ENCODE measurements at regions of chr15 and their contacts with region 1.

Region 1: GRCh38 chr15:56918046-56918938 is at the start of gene TCF12:
- DNase-seq: peak; percentile 95
- H3K4me3 ChIP-seq: peak within 1 kb of the TSS; percentile 90 to 98 (median 97)
- H3K27ac ChIP-seq: peak within 1 kb of the TSS; percentile 84
- H3K4me1 ChIP-seq: peaks cover 8% of the 10 kb centered on the region
- H3K27me3 ChIP-seq: no peaks in the 10 kb centered on the region
- CTCF ChIP-seq: peak in 1 of 2 donors; percentile 66
- total RNA-seq, gene TCF12: 91.7 to 110 TPM

Region 2: DNA sequence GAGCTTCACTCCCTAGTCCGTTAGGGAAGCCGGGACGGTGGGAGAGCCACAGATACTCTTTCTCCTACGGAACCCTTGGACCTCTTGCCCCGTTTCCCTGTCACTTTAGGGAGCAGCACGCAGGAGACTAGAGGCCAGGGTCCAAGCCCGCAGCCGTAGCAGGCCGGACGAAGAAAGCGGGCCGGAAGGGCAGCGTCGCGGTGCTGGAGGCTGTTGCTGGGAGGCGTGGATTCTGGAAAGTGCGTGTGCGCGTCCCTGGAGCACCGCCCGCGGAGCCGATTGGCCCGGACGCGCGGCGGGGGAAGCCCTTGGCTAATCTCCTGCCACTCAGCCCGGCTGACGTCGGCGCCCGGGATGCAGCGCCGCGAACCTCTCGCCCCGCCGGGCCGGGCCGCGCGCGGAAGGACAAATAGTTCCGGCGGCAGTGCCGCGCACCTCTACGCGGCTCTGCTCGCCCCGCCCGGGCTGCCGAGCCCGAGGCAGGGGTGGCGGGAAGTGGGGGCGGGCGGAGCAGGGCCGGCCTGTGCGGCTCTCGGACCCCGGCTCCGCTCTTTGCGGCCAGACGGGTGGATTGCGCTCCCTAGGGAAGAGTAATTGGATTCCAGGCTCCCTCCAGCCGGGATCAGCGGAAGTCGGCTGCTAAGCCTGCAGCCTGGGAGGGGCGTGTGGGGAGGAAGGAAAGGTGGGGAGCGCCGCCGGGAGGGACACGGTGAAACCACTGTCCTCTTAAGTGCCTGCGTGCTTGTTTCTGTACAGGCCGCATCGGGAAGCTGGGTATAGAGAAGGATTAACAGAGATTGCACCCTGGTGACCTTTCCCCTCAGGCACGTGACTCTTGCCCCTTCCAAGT is 31.1 kb before region 1 on chr15:
- CTCF ChIA-PET with region 1: interaction called, 11 read pairs
- dilution Hi-C with region 1: no loop called
- in situ Hi-C with region 1: no loop called
- intact Hi-C with region 1: loop called (anchors 1 kb)
- DNase-seq: peak; percentile 95
- H3K4me3 ChIP-seq: peak overlapping the region; percentile 47 to 62 (median 49)
- H3K27ac ChIP-seq: peak overlapping the region; percentile 74
- H3K4me1 ChIP-seq: peaks cover 14% of the 10 kb centered on the region
- H3K27me3 ChIP-seq: no peaks in the 10 kb centered on the region
- CTCF ChIP-seq: peak in 1 of 2 donors; percentile 11

Region 3: DNA sequence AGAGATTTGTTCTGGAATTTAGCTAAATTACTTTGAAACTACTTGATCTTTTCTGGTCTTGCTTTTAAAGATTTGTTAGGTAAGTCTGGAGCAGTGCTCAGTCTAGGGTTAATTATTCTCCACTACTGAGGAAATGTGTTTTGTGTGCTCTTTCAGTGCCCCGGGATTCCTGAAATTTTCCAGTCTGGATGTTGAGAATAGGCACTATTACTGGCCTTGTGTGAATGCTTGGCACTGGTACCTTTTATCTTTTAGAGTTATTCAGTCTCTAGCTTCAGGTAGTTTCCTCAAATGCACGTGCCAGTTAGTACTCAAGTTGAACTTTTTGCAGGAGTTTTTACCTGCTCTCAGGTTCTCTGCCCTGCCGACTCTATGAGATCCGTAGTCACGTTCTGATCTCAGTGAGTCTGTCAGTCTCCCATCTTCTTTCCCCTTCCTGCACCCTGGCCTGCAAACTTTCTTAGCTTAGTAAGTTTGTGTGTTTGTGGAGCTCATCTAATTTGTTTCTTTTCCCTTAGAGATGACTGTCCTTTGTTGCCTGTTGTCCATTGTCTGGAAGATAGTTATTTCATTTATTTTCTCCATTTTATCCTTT is 39.6 kb after region 1 on chr15:
- CTCF ChIA-PET with region 1: no interaction called
- dilution Hi-C with region 1: no loop called
- in situ Hi-C with region 1: no loop called
- intact Hi-C with region 1: loop called (anchors 5 kb)
- DNase-seq: no peak
- H3K4me3 ChIP-seq: no peak overlapping the region
- H3K27ac ChIP-seq: no peak overlapping the region
- H3K4me1 ChIP-seq: no peaks in the 10 kb centered on the region
- H3K27me3 ChIP-seq: no peaks in the 10 kb centered on the region
- CTCF ChIP-seq: no peak

Region 4: DNA sequence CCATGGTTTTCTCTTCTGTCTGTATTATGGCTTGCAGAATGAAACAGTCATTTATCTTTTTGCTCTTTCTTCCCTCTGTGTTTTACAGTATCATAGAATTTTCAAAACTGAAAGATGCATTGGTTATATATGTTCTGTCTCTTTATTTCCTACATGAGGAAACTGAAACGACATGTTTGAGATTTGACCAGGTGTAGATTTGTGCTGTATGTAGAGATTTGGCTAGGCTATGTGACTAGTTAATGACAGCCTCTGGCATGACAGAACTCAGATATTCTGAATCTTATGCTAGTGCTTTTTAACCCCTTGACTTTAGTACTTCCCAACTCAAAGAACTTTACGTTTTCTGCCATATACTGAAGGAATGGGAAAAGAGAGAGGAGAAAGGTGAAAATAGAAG is 151.1 kb after region 1 on chr15:
- CTCF ChIA-PET with region 1: no interaction called
- dilution Hi-C with region 1: no loop called
- in situ Hi-C with region 1: no loop called
- intact Hi-C with region 1: loop called (anchors 5 kb)
- DNase-seq: no peak
- H3K4me3 ChIP-seq: no peak overlapping the region
- H3K27ac ChIP-seq: no peak overlapping the region
- H3K4me1 ChIP-seq: peaks cover 12% of the 10 kb centered on the region
- H3K27me3 ChIP-seq: no peaks in the 10 kb centered on the region
- CTCF ChIP-seq: no peak

Region 5: DNA sequence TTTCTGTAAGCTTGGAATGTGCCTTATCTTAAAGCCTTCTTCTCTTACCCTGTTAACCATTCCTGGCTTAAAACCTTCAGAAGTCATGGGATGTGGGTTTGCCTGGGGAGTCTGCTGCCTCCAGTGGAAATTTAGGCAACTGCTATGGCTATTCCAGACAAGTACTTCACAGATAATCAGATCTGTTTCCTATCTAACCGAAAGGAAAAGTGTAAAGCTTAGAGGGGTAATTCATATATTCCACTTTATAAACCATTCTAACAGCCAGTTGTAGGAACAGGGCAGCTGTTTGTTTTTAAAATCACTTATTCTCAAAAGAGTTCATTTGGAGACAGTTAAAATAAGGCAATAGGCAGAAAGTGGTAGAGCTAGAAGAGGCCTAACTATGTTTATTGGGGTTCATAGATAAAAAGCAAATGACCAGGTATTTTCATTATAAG is 220.1 kb after region 1 on chr15:
- CTCF ChIA-PET with region 1: no interaction called
- dilution Hi-C with region 1: no loop called
- in situ Hi-C with region 1: loop called in 1 of 2 experiments (anchors 5 kb)
- intact Hi-C with region 1: loop called (anchors 1 kb)
- DNase-seq: peak; percentile 41
- H3K4me3 ChIP-seq: no peak overlapping the region
- H3K27ac ChIP-seq: no peak overlapping the region
- H3K4me1 ChIP-seq: no peaks in the 10 kb centered on the region
- H3K27me3 ChIP-seq: no peaks in the 10 kb centered on the region
- CTCF ChIP-seq: peak; percentile 90 to 93

Region 6: DNA sequence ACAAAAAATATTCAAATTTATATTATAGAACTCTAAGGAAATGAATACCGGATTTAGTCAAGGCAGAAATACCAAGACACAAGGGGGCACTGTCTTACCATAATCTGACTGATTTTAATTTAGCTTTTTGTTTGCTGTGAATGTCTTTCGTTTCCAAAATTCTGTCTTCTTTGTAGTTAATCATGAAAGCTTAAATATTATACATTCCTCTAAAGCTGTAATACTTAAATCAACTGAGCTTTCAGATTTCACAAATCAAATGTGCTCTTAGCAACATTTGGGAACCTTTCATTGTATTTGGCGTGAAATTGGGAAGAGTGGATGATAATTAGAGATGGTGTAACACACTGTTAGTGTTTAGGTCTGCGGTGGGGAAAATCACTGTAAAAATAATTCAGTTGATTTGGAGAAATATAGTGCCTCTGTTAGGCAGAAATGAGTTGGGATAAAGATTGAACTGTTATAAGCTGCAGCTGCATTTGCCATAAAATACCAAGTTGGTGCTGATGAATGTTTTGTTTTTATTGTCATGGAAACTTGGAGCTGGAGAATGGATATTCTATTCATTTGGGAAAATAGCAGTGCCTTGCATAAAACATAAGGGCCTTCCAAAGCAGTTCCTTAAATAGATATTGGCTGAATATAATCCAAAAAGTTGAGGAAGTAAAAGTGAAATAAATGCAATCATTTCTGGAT is 228.4 kb after region 1 on chr15:
- CTCF ChIA-PET with region 1: no interaction called
- dilution Hi-C with region 1: no loop called
- in situ Hi-C with region 1: no loop called
- intact Hi-C with region 1: loop called (anchors 1 kb)
- DNase-seq: peak; percentile 29
- H3K4me3 ChIP-seq: no peak overlapping the region
- H3K27ac ChIP-seq: peak overlapping the region; percentile 52
- H3K4me1 ChIP-seq: peaks cover 31% of the 10 kb centered on the region
- H3K27me3 ChIP-seq: no peaks in the 10 kb centered on the region
- CTCF ChIP-seq: peak; percentile 48 to 66

Region 7: GRCh38 chr15:57306161-57306943 is 388.1 kb after region 1 on chr15:
- CTCF ChIA-PET with region 1: interaction called, 3 read pairs
- dilution Hi-C with region 1: no loop called
- in situ Hi-C with region 1: no loop called
- intact Hi-C with region 1: loop called (anchors 2 kb)
- DNase-seq: peak; percentile 42
- H3K4me3 ChIP-seq: peak overlapping the region; percentile 39 to 53 (median 46)
- H3K27ac ChIP-seq: no peak overlapping the region
- H3K4me1 ChIP-seq: peaks cover 12% of the 10 kb centered on the region
- H3K27me3 ChIP-seq: no peaks in the 10 kb centered on the region
- CTCF ChIP-seq: peak; percentile 55 to 91